ENCODE measurements at regions of chr19 and their contacts with region 1.

Region 1: GRCh38 chr19:43678512-43679261 is 8.7 kb upstream of the PLAUR start:
- DNase-seq: no peak
- ATAC-seq: no peak
- H3K4me3 Mint-ChIP-seq: no peak overlapping the region
- H3K27ac Mint-ChIP-seq: no peak overlapping the region
- H3K4me1 Mint-ChIP-seq: peaks cover 14% of the 10 kb centered on the region
- H3K27me3 Mint-ChIP-seq: no peaks in the 10 kb centered on the region

Region 2: GRCh38 chr19:43337737-43338136 is 340.9 kb before region 1 on chr19:
- CTCF ChIA-PET with region 1: no interaction called
- DNase-seq: no peak
- ATAC-seq: no peak
- H3K4me3 Mint-ChIP-seq: no peak overlapping the region
- H3K27ac Mint-ChIP-seq: no peak overlapping the region
- H3K4me1 Mint-ChIP-seq: no peaks in the 10 kb centered on the region
- H3K27me3 Mint-ChIP-seq: peaks cover 3% of the 10 kb centered on the region

Region 3: DNA sequence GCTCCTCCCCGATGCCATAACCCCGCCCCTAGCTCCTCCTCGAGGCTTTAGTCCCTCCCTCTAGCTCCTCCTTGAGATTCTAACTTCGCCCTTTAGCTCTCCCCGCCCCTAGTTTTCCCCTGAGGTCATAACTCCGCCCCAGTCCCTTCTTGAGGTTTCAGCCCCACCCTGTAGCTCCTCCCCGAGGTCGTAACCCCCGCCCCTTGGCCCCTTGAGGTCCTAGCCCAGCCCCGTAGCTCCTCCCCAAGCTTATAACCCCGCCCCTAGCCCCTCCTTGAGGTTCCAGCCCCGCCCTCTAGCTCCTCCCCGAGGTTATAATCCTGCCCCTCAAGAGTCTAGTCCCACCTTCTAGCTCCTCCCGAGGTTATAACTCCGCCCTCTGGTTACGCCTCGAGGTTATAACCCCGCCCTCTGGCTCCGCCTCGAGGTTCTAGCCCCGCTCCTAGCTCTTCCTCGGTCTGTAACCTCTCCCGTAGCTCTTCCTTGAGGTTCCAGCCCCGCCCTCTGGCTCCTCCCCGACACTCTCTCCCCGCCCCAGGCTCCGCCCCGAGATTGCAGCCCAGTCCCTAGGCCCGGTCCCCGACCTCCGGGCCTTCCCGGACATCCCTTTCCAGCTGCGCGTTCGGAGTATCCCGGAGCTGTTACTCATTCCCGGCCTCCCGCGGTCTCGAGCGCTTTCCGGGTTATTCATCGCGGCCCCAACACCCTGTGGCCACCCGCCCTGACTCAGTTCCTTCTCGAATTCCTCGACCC is 10.1 kb before region 1 on chr19:
- CTCF ChIA-PET with region 1: interaction called, 13 read pairs
- DNase-seq: peak; percentile 99
- ATAC-seq: peak; percentile 91
- H3K4me3 Mint-ChIP-seq: peak overlapping the region; percentile 82
- H3K27ac Mint-ChIP-seq: peak overlapping the region; percentile 85
- H3K4me1 Mint-ChIP-seq: peaks cover 38% of the 10 kb centered on the region
- H3K27me3 Mint-ChIP-seq: peaks cover 12% of the 10 kb centered on the region

Region 4: GRCh38 chr19:43711751-43712355 is 33.2 kb after region 1 on chr19:
- CTCF ChIA-PET with region 1: no interaction called
- DNase-seq: no peak
- ATAC-seq: no peak
- H3K4me3 Mint-ChIP-seq: no peak overlapping the region
- H3K27ac Mint-ChIP-seq: no peak overlapping the region
- H3K4me1 Mint-ChIP-seq: peaks cover 2% of the 10 kb centered on the region
- H3K27me3 Mint-ChIP-seq: no peaks in the 10 kb centered on the region